Natural killer cell (primary cell): ENCODE measurements at regions of chr6 and their contacts with region 1.

Region 1: DNA sequence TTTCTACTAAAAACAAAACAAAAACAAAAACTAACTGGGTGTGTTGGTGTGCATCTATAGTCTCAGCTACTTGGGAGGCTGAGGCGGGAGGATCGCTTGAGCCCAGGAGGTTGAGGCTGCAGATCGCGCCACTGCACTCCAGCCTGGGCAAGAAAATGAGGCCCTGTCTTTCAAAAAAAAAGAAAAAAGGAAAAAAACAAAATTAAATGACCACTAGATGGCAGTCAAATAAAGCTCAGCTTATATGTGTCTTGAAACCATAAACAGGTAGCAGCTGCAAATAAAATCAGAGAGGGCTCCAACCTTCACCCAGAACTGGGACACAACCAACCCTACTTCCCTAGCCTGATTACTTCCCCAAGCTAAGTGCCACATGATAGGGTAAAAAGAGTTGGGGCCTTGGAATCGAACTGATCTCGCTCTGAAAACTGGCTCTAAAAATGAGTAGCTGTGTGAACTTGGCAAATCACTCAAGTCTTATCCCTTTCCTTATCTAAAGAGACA is 67.1 kb upstream of the ADGRF4 start:
- DNase-seq: peak in 1 of 2 donors; percentile 59
- ATAC-seq: peak in 2 of 3 donors; percentile 5 to 57
- H3K4me3 ChIP-seq: no peak overlapping the region
- H3K4me3 Mint-ChIP-seq: no peak overlapping the region
- H3K27ac ChIP-seq: no peak overlapping the region
- H3K27ac Mint-ChIP-seq: peak overlapping the region; percentile 14 to 60
- H3K4me1 ChIP-seq: peaks cover 12% of the 10 kb centered on the region
- H3K4me1 Mint-ChIP-seq: peaks cover 13 to 14% of the 10 kb centered on the region in 2 donors
- H3K27me3 ChIP-seq: no peaks in the 10 kb centered on the region
- H3K27me3 Mint-ChIP-seq: no peaks in the 10 kb centered on the region
- CTCF ChIP-seq: peak; percentile 67

Region 2: GRCh38 chr6:47680051-47680450 is 48.7 kb after region 1 on chr6:
- intact Hi-C with region 1: no loop called
- DNase-seq: no peak
- ATAC-seq: no peak
- H3K4me3 ChIP-seq: no peak overlapping the region
- H3K4me3 Mint-ChIP-seq: no peak overlapping the region
- H3K27ac ChIP-seq: no peak overlapping the region
- H3K27ac Mint-ChIP-seq: no peak overlapping the region
- H3K4me1 ChIP-seq: no peaks in the 10 kb centered on the region
- H3K4me1 Mint-ChIP-seq: no peaks in the 10 kb centered on the region
- H3K27me3 ChIP-seq: no peaks in the 10 kb centered on the region
- H3K27me3 Mint-ChIP-seq: peaks cover 3 to 16% of the 10 kb centered on the region in 2 donors
- CTCF ChIP-seq: no peak

Region 3: DNA sequence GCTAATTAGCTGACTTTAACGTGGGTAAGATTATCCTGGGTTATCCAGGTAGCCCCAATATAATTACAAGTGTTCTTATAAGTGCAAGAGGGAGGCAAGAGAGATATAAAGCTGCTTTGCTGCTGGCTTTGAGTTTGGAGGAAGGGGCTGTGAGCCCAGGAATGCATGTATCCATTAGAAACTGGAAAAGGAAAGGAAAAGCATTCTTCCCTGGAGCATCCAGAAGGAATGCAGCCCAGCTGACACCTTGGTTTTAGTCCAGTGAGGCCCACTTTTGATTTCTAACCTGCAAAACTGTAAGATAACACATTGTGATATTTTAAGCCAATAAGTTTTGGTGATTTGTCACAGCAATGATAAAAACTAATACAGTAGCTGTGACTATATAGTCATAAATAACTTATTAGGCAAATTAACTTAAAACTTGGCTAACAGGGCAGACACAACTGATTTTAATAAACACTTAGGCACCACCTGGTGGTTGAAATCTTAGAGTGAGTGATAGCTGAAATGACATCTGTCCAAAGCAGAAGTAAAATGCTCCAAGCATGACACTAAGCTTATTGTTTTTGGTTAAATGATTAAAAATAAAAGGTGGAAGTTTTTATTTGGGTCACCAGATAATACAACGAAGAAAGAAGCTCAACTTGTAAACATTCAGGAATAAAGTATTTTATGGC is 102.7 kb after region 1 on chr6:
- intact Hi-C with region 1: loop called (anchors 1 kb)
- DNase-seq: peak in 1 of 2 donors; percentile 40
- ATAC-seq: no peak
- H3K4me3 ChIP-seq: no peak overlapping the region
- H3K4me3 Mint-ChIP-seq: no peak overlapping the region
- H3K27ac ChIP-seq: no peak overlapping the region
- H3K27ac Mint-ChIP-seq: no peak overlapping the region
- H3K4me1 ChIP-seq: no peaks in the 10 kb centered on the region
- H3K4me1 Mint-ChIP-seq: no peaks in the 10 kb centered on the region
- H3K27me3 ChIP-seq: no peaks in the 10 kb centered on the region
- H3K27me3 Mint-ChIP-seq: peaks cover 0 to 3% of the 10 kb centered on the region in 2 donors
- CTCF ChIP-seq: no peak

Region 4: DNA sequence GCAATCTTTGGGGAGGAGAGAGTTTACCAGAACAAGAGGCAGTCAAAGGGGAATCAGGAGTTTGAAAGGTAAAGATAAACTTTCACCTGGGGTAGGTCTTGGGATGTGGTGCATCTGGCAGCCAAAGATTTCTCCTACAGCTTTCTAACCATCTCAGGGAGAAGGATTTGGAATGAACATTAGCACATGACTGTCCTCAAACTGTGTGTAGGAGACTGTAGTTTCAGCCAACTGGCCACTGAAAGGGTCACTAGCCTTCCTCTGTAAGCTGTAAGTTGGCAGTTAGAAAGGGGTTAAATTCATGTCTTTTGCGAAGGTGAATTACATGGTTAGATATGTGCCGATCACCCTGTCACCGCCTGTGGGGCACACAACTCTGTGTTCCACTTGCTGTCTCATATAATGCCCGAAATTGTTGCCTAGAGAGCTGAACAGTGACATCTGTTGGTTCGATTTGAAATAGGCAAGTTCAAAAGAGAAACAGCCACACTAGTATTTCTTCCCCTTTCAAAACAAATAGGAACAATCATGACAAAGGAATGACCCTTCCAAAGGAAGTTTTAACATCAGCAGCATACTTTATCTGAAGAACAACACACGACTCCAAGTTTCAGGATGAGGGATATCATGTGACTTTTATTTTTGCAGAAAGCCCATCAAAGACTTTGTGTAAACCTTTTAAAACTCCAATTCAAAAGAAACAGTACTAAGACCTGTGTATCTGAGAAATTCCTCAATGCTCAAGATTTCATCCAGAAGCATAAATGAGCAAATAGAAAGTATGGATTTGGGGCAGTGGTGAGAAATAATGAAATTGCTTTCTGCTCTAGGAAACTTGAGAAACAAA is 149.4 kb after region 1 on chr6:
- intact Hi-C with region 1: loop called (anchors 1 kb)
- DNase-seq: peak in 1 of 2 donors; percentile 65
- ATAC-seq: peak; percentile 60 to 76 (median 62)
- H3K4me3 ChIP-seq: no peak overlapping the region
- H3K4me3 Mint-ChIP-seq: no peak overlapping the region
- H3K27ac ChIP-seq: no peak overlapping the region
- H3K27ac Mint-ChIP-seq: no peak overlapping the region
- H3K4me1 ChIP-seq: no peaks in the 10 kb centered on the region
- H3K4me1 Mint-ChIP-seq: peaks cover 0 to 6% of the 10 kb centered on the region in 2 donors
- H3K27me3 ChIP-seq: no peaks in the 10 kb centered on the region
- H3K27me3 Mint-ChIP-seq: peaks cover 7 to 9% of the 10 kb centered on the region in 2 donors
- CTCF ChIP-seq: peak; percentile 34

Region 5: GRCh38 chr6:47934023-47934422 is 302.7 kb after region 1 on chr6:
- intact Hi-C with region 1: no loop called
- DNase-seq: no peak
- ATAC-seq: no peak
- H3K4me3 ChIP-seq: no peak overlapping the region
- H3K4me3 Mint-ChIP-seq: no peak overlapping the region
- H3K27ac ChIP-seq: no peak overlapping the region
- H3K27ac Mint-ChIP-seq: no peak overlapping the region
- H3K4me1 ChIP-seq: no peaks in the 10 kb centered on the region
- H3K4me1 Mint-ChIP-seq: no peaks in the 10 kb centered on the region
- H3K27me3 ChIP-seq: no peaks in the 10 kb centered on the region
- H3K27me3 Mint-ChIP-seq: no peaks in the 10 kb centered on the region
- CTCF ChIP-seq: no peak